ENCODE measurements at regions of chr15 and their contacts with region 1.

Region 1: GRCh38 chr15:75201609-75202250 is at the start of gene C15orf39:
- DNase-seq: peak in 1 of 2 donors; percentile 84
- H3K4me3 ChIP-seq: peak within 1 kb of the TSS; percentile 87 to 96
- H3K27ac ChIP-seq: peak within 1 kb of the TSS; percentile 96 to 98
- H3K4me1 ChIP-seq: peaks cover 17 to 33% of the 10 kb centered on the region in 2 donors
- H3K27me3 ChIP-seq: no peaks in the 10 kb centered on the region
- CTCF ChIP-seq: peak; percentile 59 to 99 (median 75)
- total RNA-seq, gene C15orf39: 30.8 TPM

Region 2: DNA sequence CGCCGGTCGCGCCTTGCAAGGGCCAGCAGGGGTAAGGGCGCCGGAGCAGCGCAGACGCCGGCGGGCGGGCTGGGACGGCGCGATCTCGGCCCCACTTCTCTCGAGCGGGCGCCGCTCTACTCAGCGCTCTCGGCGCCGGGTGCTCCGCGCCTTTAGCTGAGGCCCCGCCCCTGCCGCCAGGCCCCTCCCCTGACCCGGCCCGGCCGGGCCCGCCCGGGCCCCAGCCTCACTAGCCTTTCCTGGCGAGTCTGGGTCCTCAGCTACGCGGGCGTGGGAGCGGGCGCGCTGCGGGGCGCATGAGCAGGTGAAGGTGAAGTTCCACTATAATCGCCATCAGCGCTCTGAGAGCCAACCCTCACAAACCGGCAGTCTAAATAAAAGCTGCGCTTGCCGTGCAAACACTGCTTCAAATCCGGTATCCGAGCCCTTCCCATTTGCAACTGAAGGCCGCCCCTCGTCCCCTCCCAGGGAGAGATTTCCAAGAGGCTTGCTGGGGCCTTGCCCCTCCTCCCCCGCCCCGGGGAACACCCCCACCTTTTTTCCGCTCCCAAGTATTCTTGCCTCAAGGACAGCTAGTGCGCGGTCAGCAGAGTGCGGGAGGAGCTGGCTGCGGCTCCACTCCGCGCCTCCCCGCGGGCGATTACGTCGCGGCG is 245.0 kb before region 1 on chr15 and contains the start of gene RPP25:
- intact Hi-C with region 1: loop called (anchors 2 kb)
- DNase-seq: peak; percentile 36 to 89
- H3K4me3 ChIP-seq: peak within 1 kb of the TSS; percentile 71 to 84
- H3K27ac ChIP-seq: peak within 1 kb of the TSS; percentile 91 to 94
- H3K4me1 ChIP-seq: peaks cover 7 to 16% of the 10 kb centered on the region in 2 donors
- H3K27me3 ChIP-seq: no peaks in the 10 kb centered on the region
- CTCF ChIP-seq: no peak
- total RNA-seq, gene RPP25: 28.4 TPM

Region 3: DNA sequence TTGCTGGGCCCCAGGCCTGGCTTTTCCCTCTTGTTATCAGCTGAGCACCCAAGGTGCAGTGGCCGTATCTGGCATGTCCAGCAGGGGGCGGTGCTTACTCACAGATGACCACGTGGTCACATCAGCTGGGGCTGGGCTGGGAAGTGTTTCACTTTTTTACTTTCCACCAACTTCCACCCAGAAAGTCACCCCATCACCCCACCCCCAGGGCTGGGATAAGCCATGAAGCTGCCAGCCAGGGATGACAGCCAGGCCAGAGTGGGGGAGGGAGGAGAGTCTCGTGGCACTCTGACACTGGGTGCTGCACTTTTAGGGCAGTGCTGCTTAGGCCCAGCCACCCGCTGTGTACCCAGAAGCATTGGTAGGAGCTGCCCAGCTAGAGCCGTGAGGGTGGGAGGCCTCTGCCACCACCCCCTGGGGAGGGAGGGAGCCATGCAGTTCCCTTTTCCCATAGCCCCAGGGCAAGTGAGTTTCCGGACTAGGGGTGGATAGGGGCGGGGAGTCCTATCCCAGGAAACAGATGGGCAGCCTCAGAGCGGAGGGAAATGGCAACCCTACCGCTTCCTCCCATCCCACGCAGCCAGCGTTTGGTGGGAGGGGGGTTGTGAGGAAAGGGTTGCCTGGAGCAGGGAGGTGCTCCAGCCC is 172.2 kb before region 1 on chr15:
- intact Hi-C with region 1: loop called (anchors 1 kb)
- DNase-seq: peak; percentile 78 to 97
- H3K4me3 ChIP-seq: peak overlapping the region; percentile 10 to 44
- H3K27ac ChIP-seq: peak overlapping the region; percentile 84 to 90
- H3K4me1 ChIP-seq: peaks cover 15 to 25% of the 10 kb centered on the region in 2 donors
- H3K27me3 ChIP-seq: no peaks in the 10 kb centered on the region
- CTCF ChIP-seq: peak; percentile 89 to 95 (median 92)

Region 4: GRCh38 chr15:75107908-75108838 is 93.6 kb before region 1 on chr15:
- intact Hi-C with region 1: no loop called
- DNase-seq: no peak
- H3K4me3 ChIP-seq: no peak overlapping the region
- H3K27ac ChIP-seq: peak overlapping the region in 1 of 2 donors; percentile 5
- H3K4me1 ChIP-seq: peaks cover 7 to 13% of the 10 kb centered on the region in 2 donors
- H3K27me3 ChIP-seq: no peaks in the 10 kb centered on the region
- CTCF ChIP-seq: no peak

Region 5: GRCh38 chr15:75153087-75153486 is 48.6 kb before region 1 on chr15:
- intact Hi-C with region 1: loop called (anchors 5 kb)
- DNase-seq: peak in 1 of 2 donors; percentile 12
- H3K4me3 ChIP-seq: no peak overlapping the region
- H3K27ac ChIP-seq: no peak overlapping the region
- H3K4me1 ChIP-seq: no peaks in the 10 kb centered on the region
- H3K27me3 ChIP-seq: no peaks in the 10 kb centered on the region
- CTCF ChIP-seq: no peak

Region 6: GRCh38 chr15:75453703-75454470 is 252.2 kb after region 1 on chr15:
- intact Hi-C with region 1: loop called (anchors 10 kb)
- DNase-seq: peak; percentile 96 to 99
- H3K4me3 ChIP-seq: peak overlapping the region; percentile 77 to 96
- H3K27ac ChIP-seq: peak overlapping the region; percentile 97 to 98
- H3K4me1 ChIP-seq: peaks cover 2 to 13% of the 10 kb centered on the region in 2 donors
- H3K27me3 ChIP-seq: no peaks in the 10 kb centered on the region
- CTCF ChIP-seq: no peak

Measured in ascending aorta (tissue), 2 donors.